Sigmoid colon (tissue), 7 donors: ENCODE measurements at regions of chr2 and their contacts with region 1.

Region 1: DNA sequence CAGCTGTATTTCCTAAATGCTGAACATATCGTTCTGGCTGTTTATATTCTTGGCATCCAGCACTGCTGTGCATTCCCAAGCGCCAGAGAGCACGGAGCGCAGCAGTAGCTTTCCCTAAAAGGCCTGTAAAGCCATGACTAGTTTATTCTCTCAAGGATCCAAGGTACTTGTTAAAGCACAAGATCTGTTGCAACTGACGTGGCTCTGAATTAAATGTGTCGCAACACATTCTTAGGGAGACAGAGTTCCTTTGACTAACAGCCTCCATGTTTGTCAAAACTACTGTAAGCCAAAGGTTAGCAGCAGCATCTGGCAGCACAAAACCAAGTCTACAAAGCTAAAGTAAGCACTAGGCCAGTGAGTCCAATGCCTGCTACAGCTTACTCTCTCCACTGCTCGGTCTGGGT is 188.6 kb upstream of the FN1 start:
- DNase-seq: peak; percentile 92
- H3K4me3 ChIP-seq: no peak overlapping the region
- H3K27ac ChIP-seq: peak overlapping the region; percentile 80 to 89 (median 86)
- H3K4me1 ChIP-seq: peaks cover 0 to 47% (median 36%) of the 10 kb centered on the region in 4 donors
- H3K27me3 ChIP-seq: no peaks in the 10 kb centered on the region
- CTCF ChIP-seq: no peak
- EP300 ChIP-seq: peak; percentile 95 to 99 (median 98)
- POLR2A ChIP-seq: peak in 1 of 2 donors; percentile 13

Region 2: GRCh38 chr2:215347878-215348277 is 276.5 kb before region 1 on chr2:
- intact Hi-C with region 1: no loop called
- DNase-seq: no peak
- H3K4me3 ChIP-seq: no peak overlapping the region
- H3K27ac ChIP-seq: no peak overlapping the region
- H3K4me1 ChIP-seq: peaks cover 0 to 3% (median 0%) of the 10 kb centered on the region in 4 donors
- H3K27me3 ChIP-seq: no peaks in the 10 kb centered on the region
- CTCF ChIP-seq: no peak
- EP300 ChIP-seq: no peak
- POLR2A ChIP-seq: no peak

Region 3: DNA sequence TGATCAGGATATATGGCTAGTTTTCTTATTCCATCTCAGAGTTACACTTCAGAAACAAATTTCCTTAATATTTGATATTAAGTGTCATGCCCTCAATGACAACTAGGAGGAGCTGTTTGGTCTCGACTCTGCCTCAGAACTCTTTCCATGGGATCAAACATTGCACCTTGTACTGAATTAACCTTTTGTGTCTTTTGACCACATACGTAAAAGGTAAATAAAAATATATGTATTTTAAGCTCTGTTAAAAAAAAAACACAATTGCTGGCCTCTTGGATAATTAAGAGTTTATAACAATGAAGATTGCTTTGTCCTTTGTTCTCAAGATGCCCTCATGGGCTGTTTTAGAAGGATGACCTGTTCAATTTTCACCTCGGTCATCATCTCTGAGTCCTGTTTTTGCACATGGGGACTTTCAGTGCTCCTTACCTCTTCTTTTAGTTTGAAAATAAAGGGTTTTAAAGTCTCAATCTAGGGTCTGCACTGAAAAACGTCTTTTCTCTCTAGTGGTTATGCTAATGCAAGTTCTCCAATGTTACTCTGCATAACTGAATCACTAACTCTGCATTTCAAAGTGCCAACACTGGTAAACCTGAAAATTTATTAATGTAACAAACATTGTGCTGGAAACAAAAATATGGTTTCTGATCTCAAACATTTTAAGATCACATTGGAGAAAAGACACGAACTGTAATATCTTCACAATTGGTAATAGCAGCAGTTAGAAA is 169.7 kb before region 1 on chr2:
- intact Hi-C with region 1: loop called (anchors 5 kb)
- DNase-seq: no peak
- H3K4me3 ChIP-seq: no peak overlapping the region
- H3K27ac ChIP-seq: no peak overlapping the region
- H3K4me1 ChIP-seq: no peaks in the 10 kb centered on the region
- H3K27me3 ChIP-seq: no peaks in the 10 kb centered on the region
- CTCF ChIP-seq: peak; percentile 30 to 73 (median 66)
- EP300 ChIP-seq: no peak
- POLR2A ChIP-seq: no peak

Region 4: DNA sequence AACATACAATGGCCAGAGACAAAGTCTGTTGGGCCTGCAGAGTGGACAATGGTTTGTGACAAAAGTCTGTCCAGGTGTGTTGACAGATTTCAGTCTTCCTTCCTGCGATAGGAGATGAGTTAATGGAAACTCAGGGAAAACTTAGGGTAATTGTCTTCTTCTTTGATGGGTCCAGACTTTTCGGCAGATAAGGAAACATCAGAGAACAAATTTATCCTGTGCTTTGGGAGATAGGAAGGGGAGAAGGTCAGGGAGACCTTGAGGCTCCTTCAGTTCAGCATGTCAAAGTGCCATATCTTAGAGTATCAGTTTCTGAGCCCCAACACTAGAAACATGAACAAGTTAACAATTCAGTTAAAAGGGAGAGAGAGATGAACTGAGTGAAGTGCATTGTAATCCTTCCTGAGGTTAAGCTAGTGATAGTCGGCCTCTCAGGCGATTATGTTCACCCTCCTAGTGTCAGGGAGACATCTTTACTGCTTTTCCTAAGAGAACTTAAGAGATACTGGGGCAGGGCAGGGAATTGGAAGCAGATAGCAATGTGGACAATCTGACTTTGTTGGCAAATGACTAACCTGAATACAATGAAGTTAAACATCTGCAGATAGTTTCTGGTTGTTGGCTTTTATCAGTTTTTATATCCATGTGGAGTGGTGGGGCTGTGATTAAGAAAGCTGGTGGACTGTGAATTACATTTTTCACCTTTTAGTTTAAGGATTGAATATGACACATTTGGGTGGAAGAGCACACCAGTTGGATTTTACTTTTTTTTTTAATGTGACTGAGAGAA is 60.2 kb after region 1 on chr2:
- intact Hi-C with region 1: no loop called
- DNase-seq: no peak
- H3K4me3 ChIP-seq: no peak overlapping the region
- H3K27ac ChIP-seq: peak overlapping the region in 2 of 4 donors; percentile 16 to 54
- H3K4me1 ChIP-seq: peaks cover 0 to 8% (median 3%) of the 10 kb centered on the region in 4 donors
- H3K27me3 ChIP-seq: no peaks in the 10 kb centered on the region
- CTCF ChIP-seq: no peak
- EP300 ChIP-seq: no peak
- POLR2A ChIP-seq: no peak

Region 5: DNA sequence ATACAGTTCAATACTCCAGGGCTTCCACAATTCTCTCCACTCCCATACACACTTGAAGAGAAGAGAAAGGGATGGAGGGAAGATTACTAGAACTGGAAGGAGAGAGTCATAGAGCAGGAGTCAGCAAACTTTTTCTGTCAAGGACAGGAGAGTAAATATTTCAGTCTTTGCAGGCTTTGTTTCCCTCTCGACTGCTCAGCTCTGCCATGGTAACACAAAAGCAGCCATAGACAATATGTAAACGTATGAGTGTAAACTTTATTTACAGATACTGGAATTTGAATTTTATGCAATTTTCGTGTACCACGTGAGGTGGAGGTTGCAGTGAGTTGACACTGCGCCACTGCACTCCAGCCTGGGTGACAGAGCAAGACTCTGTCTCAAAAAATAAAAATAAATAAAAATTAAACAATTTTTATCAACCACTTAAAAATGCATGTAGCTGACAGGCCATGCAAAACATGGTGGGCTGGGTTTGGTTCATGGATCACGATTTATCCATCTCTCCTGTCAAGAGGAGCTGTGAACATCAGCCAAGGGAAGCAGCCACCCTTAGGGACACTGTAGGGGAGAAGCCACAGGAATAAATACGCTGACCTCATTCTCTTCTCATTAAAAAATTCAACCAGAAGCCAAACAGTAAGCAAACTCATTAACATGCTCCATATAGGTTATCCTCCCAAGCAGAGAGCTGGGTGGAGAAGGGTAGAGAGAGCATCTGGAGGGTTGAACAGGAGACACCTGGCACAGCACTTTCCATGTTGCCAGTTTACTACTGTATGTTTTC is 77.9 kb after region 1 on chr2:
- intact Hi-C with region 1: loop called (anchors 5 kb)
- DNase-seq: no peak
- H3K4me3 ChIP-seq: no peak overlapping the region
- H3K27ac ChIP-seq: peak overlapping the region; percentile 68 to 82 (median 73)
- H3K4me1 ChIP-seq: peaks cover 0 to 50% (median 39%) of the 10 kb centered on the region in 4 donors
- H3K27me3 ChIP-seq: no peaks in the 10 kb centered on the region
- CTCF ChIP-seq: no peak
- EP300 ChIP-seq: no peak
- POLR2A ChIP-seq: no peak

Region 6: GRCh38 chr2:215784371-215784783 is 160.0 kb after region 1 on chr2:
- intact Hi-C with region 1: loop called (anchors 5 kb)
- DNase-seq: peak; percentile 79
- H3K4me3 ChIP-seq: no peak overlapping the region
- H3K27ac ChIP-seq: peak overlapping the region; percentile 58 to 85 (median 78)
- H3K4me1 ChIP-seq: peaks cover 0 to 59% (median 31%) of the 10 kb centered on the region in 4 donors
- H3K27me3 ChIP-seq: no peaks in the 10 kb centered on the region
- CTCF ChIP-seq: no peak
- EP300 ChIP-seq: peak in 3 of 4 donors; percentile 62 to 86 (median 67)
- POLR2A ChIP-seq: no peak